Activated CD8-positive, alpha-beta memory T cell treated with anti-CD3 and anti-CD28 coated beads, Interleukin-2, amount 10 ng/mL, durations not matched to agents 7 days and 5 days (primary cell): ENCODE measurements at regions of chr16 and their contacts with region 1.

Region 1: DNA sequence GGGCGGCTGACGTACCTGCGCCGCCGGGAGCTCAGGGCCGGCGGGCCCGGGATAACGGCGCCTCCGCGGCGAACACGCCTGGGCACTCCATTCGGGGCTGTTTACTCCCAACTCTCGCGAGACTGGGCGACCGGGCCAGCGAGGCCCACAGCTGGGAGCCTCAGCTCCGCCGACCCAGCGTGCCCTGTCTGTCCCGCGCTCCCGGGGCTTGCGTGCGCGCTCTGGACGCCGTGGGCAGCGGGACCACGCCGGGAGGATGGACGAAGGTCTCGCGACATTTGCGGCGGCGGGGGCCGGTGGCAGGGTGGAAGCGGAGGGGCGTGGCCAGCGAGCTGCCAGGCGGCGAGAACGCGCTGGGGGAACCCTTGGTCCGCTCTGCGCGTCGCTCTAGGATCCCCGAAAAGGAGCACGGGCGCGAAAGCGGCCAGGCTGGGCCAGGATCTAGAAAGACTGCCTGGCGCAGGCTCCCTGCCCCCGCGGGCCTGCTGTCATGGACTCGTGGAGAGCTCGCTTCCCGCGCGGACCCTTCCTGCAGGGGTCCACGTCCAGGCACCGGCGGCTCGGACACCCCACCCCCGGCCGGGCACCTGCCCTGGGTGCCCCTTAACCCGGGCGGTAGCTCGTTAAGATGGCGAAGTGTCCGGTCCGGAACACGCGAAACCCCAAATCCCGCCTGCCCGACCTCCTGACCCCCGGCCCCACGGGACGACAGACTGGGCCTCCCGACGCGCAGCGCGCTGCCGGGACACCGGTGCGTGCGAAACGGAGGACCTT is at the start of gene MBTPS1:
- DNase-seq: peak; percentile 98
- ATAC-seq: peak; percentile 94
- H3K4me3 Mint-ChIP-seq: peak within 1 kb of the TSS; percentile 88
- H3K27ac Mint-ChIP-seq: peak within 1 kb of the TSS; percentile 93
- H3K4me1 Mint-ChIP-seq: peaks cover 23% of the 10 kb centered on the region
- H3K27me3 Mint-ChIP-seq: no peaks in the 10 kb centered on the region
- total RNA-seq, gene MBTPS1: 56.1 to 57.8 TPM

Region 2: GRCh38 chr16:84096115-84097012 is 20.5 kb before region 1 on chr16:
- CTCF ChIA-PET with region 1: interaction called, 18 read pairs
- DNase-seq: no peak
- ATAC-seq: no peak
- H3K4me3 Mint-ChIP-seq: no peak overlapping the region
- H3K27ac Mint-ChIP-seq: no peak overlapping the region
- H3K4me1 Mint-ChIP-seq: peaks cover 17% of the 10 kb centered on the region
- H3K27me3 Mint-ChIP-seq: no peaks in the 10 kb centered on the region

Region 3: DNA sequence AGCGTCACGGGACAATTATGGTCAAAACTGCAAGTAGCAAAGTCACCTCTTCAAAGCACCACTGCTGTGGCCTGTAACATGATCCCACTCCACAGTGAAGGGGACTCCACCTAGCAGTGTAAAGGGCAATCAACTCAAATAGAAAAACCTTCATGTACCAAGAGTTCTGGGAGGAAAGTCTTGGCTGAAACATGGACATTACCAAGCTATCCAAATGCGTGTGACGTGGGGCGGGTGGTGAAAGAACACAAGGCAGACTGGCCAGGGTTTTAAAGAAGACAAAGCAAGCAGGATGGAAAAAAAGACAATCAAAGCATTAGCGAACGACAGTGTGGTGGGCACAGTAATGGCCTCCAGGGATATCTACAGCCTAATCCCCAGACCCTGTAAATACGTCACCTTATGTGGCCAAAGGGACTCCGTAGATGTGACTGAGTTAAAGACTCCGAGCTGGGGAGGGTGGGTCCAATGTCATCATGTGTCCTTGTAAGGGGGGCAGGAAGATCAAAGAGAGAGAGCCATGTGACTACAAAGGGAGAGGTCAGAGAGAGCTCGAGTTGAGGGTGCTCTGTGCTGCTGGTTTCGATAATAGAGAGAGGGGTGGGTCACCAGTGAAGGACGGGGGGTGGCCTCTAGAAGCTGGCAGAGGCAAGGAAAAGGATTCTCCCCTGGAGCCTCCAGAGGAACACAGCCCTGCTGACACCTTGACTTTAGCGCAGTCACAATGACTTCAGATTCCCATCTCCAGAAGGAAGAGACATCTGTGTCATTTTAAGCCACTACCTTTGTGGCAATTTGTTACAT is 22.1 kb after region 1 on chr16:
- CTCF ChIA-PET with region 1: interaction called, 17 read pairs
- DNase-seq: peak; percentile 72
- ATAC-seq: peak; percentile 91
- H3K4me3 Mint-ChIP-seq: peak overlapping the region; percentile 11
- H3K27ac Mint-ChIP-seq: peak overlapping the region; percentile 76
- H3K4me1 Mint-ChIP-seq: peaks cover 28% of the 10 kb centered on the region
- H3K27me3 Mint-ChIP-seq: no peaks in the 10 kb centered on the region

Region 4: DNA sequence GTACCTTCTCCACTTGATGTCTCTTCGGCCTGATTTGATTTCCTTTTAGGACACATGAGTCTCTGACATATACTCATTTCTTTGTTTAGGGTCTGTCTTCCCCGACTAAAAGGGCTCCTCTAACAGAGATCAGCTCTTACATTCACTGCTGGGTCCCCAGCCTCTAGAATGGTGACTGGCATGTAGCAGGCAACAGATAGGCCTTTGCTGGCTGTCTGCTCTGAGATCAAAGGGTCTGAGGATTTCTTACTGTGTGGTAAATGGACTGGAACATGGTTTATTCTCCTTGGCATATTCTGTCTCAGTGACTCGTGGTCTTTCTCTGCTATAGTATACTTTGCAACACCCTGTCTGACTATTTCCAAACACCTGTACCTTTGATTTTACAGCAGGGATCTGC is 44.9 kb after region 1 on chr16:
- CTCF ChIA-PET with region 1: no interaction called
- DNase-seq: no peak
- ATAC-seq: no peak
- H3K4me3 Mint-ChIP-seq: no peak overlapping the region
- H3K27ac Mint-ChIP-seq: no peak overlapping the region
- H3K4me1 Mint-ChIP-seq: peaks cover 7% of the 10 kb centered on the region
- H3K27me3 Mint-ChIP-seq: peaks cover 68% of the 10 kb centered on the region